K562 (cell line): ENCODE measurements at regions of chr11 and their contacts with region 1.

Region 1: GRCh38 chr11:121112498-121113455 is 11.7 kb downstream of the TECTA start:
- DNase-seq: peak; percentile 22 to 57 (median 42)
- ATAC-seq: peak; percentile 93
- H3K4me3 ChIP-seq: no peak overlapping the region
- H3K27ac ChIP-seq: no peak overlapping the region
- H3K4me1 ChIP-seq: no peaks in the 10 kb centered on the region
- H3K27me3 ChIP-seq: peaks cover 5 to 16% of the 10 kb centered on the region in 2 experiments; a peak in 3 of 5 replicates
- CTCF ChIP-seq: peak; percentile 50 to 69 (median 50); a peak in 5 of 6 replicates
- EP300 ChIP-seq: no peak
- POLR2A ChIP-seq: no peak
- RAD21 ChIP-seq: peak; percentile 58 to 71

Region 2: GRCh38 chr11:120517390-120517761 is 595.4 kb before region 1 on chr11:
- CTCF ChIA-PET with region 1: interaction called, 4 read pairs
- POLR2A ChIA-PET with region 1: no interaction called
- in situ Hi-C with region 1: no loop called
- intact Hi-C with region 1: loop called (anchors 2 kb)
- DNase-seq: no peak
- ATAC-seq: no peak
- H3K4me3 ChIP-seq: no peak overlapping the region
- H3K27ac ChIP-seq: no peak overlapping the region
- H3K4me1 ChIP-seq: peaks cover 0 to 6% of the 10 kb centered on the region in 2 experiments; a peak in 2 of 5 replicates
- H3K27me3 ChIP-seq: peaks cover 44 to 92% of the 10 kb centered on the region in 2 experiments; a peak in 4 of 5 replicates
- CTCF ChIP-seq: no peak
- EP300 ChIP-seq: no peak
- POLR2A ChIP-seq: no peak
- RAD21 ChIP-seq: no peak

Region 3: GRCh38 chr11:120929664-120930154 is 183.1 kb before region 1 on chr11:
- CTCF ChIA-PET with region 1: no interaction called
- POLR2A ChIA-PET with region 1: no interaction called
- in situ Hi-C with region 1: no loop called
- intact Hi-C with region 1: loop called (anchors 5 kb)
- DNase-seq: peak; percentile 67 to 83 (median 75)
- ATAC-seq: peak; percentile 96
- H3K4me3 ChIP-seq: no peak overlapping the region
- H3K27ac ChIP-seq: no peak overlapping the region
- H3K4me1 ChIP-seq: no peaks in the 10 kb centered on the region; a peak in 1 of 5 replicates
- H3K27me3 ChIP-seq: peaks cover 2 to 18% of the 10 kb centered on the region in 2 experiments; a peak in 3 of 5 replicates
- CTCF ChIP-seq: peak; percentile 56 to 74 (median 61)
- EP300 ChIP-seq: no peak
- POLR2A ChIP-seq: no peak
- RAD21 ChIP-seq: peak; percentile 10 to 51; a peak in 1 of 4 replicates

Region 4: DNA sequence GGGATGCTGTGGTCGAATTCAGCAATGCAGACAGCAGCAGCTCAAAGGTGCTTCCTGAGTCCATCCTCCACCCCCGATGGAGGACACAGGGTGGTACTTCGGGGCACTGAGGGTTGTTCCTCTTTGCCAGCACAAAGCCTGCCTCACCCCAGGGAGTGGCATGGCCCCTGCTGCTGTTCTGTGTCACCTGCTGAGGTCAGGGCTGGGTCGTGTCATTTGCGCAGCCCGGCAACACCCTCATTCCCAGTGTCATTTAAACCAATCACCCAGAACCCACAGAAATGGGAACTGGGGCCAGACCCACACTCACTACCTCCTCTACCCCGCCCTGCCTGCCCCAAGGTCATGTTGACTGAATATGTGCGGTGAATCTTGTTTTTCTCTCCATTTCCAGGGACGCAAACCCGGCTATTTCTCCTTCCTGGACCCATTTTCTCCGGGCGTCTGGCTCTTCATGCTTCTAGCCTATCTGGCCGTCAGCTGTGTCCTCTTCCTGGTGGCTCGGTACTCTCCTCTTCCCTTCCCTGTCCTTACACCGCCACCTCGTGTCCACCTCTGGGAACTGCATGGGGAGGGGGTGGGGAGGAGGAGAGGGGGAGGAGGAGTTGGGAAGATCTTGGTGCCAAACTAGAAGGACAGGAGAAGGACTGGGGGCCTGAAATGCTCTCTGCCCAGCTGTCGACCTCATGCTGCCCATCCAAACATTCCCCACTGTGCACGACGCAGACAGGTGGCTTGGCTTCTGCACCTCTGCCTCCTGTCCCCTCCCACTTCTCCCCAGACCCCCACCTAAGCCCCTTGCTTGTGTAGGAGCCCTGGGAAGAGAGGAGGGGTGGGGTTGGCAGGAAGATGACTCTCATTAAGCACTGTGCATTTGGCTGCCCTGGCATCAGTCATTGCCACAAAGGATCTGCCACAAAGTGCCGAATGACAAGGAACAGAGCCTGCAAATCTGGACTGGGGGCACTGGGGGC is 160.0 kb before region 1 on chr11:
- CTCF ChIA-PET with region 1: no interaction called
- POLR2A ChIA-PET with region 1: no interaction called
- in situ Hi-C with region 1: no loop called
- intact Hi-C with region 1: loop called (anchors 5 kb)
- DNase-seq: peak; percentile 77 to 87 (median 84)
- ATAC-seq: peak; percentile 96
- H3K4me3 ChIP-seq: no peak overlapping the region
- H3K27ac ChIP-seq: no peak overlapping the region
- H3K4me1 ChIP-seq: no peaks in the 10 kb centered on the region; a peak in 1 of 5 replicates
- H3K27me3 ChIP-seq: peaks cover 0 to 34% of the 10 kb centered on the region in 2 experiments; a peak in 3 of 5 replicates
- CTCF ChIP-seq: peak; percentile 62 to 82 (median 73)
- EP300 ChIP-seq: no peak
- POLR2A ChIP-seq: no peak
- RAD21 ChIP-seq: peak; percentile 42 to 61

Region 5: DNA sequence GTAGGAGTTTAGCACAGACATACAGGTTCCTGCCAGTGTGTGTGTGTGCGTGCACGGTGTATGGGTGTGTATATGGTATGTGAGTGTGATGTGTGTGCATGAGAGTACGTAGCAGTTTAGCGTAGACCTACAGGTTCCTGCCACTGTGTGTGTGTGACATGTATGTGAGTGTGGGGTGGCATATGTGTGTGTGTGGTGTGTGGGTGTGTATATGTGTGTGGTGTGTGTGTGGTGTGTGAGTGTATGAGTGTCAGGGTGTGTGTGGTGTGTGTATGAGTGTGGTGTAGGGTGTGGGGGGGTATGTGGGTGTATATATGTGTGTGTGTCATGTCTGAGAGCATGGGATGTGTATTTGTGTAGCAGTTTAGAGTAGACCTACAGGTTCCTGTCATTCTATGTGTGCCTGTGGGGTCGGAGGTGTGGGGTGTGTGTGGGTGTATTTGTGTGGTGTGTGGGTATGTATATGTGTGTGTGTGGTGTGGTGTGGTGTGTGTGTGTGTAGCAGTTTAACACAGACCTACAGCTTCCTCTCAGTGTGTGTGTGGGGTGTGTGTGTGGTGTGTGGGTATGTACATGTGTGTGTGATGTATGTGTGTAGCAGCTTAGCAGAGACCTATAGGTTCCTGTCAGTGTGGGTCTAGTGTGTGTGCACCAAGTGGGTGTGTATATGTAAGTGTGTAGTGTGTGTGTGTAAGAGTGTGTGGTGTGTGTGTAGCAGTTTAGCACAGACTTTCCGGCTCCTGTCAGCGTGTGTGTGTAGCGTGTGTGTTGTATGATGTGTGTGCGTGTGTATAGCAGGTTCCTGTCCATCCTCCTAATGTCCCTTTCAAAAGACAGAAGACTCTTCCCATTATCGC is 120.7 kb before region 1 on chr11:
- CTCF ChIA-PET with region 1: no interaction called
- POLR2A ChIA-PET with region 1: no interaction called
- in situ Hi-C with region 1: no loop called
- intact Hi-C with region 1: no loop called
- DNase-seq: no peak
- ATAC-seq: no peak
- H3K4me3 ChIP-seq: no peak overlapping the region
- H3K27ac ChIP-seq: no peak overlapping the region
- H3K4me1 ChIP-seq: no peaks in the 10 kb centered on the region
- H3K27me3 ChIP-seq: peaks cover 4 to 16% of the 10 kb centered on the region in 2 experiments; a peak in 3 of 5 replicates
- CTCF ChIP-seq: no peak
- EP300 ChIP-seq: no peak
- POLR2A ChIP-seq: no peak
- RAD21 ChIP-seq: no peak